ENCODE measurements at regions of chr12 and their contacts with region 1.

Region 1: GRCh38 chr12:100554608-100555077 is 18.8 kb upstream of the GAS2L3 start:
- DNase-seq: no peak
- ATAC-seq: no peak
- H3K4me3 Mint-ChIP-seq: no peak overlapping the region
- H3K27ac Mint-ChIP-seq: no peak overlapping the region
- H3K4me1 Mint-ChIP-seq: no peaks in the 10 kb centered on the region
- H3K27me3 Mint-ChIP-seq: peaks cover 3% of the 10 kb centered on the region

Region 2: GRCh38 chr12:100234598-100235304 is 319.9 kb before region 1 on chr12:
- CTCF ChIA-PET with region 1: interaction called, 12 read pairs
- DNase-seq: no peak
- ATAC-seq: no peak
- H3K4me3 Mint-ChIP-seq: no peak overlapping the region
- H3K27ac Mint-ChIP-seq: no peak overlapping the region
- H3K4me1 Mint-ChIP-seq: no peaks in the 10 kb centered on the region
- H3K27me3 Mint-ChIP-seq: no peaks in the 10 kb centered on the region

Region 3: GRCh38 chr12:100601626-100602025 is 47.0 kb after region 1 on chr12:
- CTCF ChIA-PET with region 1: no interaction called
- DNase-seq: no peak
- ATAC-seq: no peak
- H3K4me3 Mint-ChIP-seq: no peak overlapping the region
- H3K27ac Mint-ChIP-seq: no peak overlapping the region
- H3K4me1 Mint-ChIP-seq: no peaks in the 10 kb centered on the region
- H3K27me3 Mint-ChIP-seq: no peaks in the 10 kb centered on the region

Region 4: DNA sequence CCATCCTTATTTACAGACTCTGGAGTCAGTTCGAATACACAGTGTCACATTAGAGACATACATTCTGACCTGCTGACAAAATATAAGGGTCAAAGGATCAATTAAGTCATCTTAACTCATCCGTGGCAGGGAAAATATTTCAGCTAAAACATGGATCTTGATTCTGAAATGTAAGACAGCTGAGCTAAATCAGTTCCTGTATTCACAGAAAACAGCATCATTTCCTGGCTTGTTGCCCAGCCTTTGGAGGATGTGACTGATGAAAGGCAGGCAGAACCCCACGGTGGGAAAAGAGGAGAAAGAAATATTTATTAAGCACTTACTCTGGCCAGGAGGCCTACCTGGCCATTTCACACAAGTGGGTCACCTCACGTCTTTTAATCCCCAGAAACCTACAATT is 120.8 kb after region 1 on chr12:
- CTCF ChIA-PET with region 1: no interaction called
- DNase-seq: no peak
- ATAC-seq: no peak
- H3K4me3 Mint-ChIP-seq: no peak overlapping the region
- H3K27ac Mint-ChIP-seq: no peak overlapping the region
- H3K4me1 Mint-ChIP-seq: no peaks in the 10 kb centered on the region
- H3K27me3 Mint-ChIP-seq: peaks cover 3% of the 10 kb centered on the region